MCF 10A (cell line): ENCODE measurements at regions of chr10 and their contacts with region 1.

Region 1: GRCh38 chr10:122307669-122308486 is 36.8 kb downstream of the BTBD16 start:
- DNase-seq: peak; percentile 98
- H3K4me3 Mint-ChIP-seq: peak overlapping the region; percentile 64
- H3K27ac Mint-ChIP-seq: peak overlapping the region; percentile 94
- H3K4me1 Mint-ChIP-seq: peaks cover 22% of the 10 kb centered on the region
- H3K27me3 Mint-ChIP-seq: no peaks in the 10 kb centered on the region
- CTCF ChIP-seq: no peak

Region 2: GRCh38 chr10:122323941-122324675 is 16.2 kb after region 1 on chr10:
- CTCF ChIA-PET with region 1: interaction called, 13 read pairs
- POLR2A ChIA-PET with region 1: interaction called, 73 read pairs
- intact Hi-C with region 1: no loop called
- DNase-seq: peak; percentile 91
- H3K4me3 Mint-ChIP-seq: no peak overlapping the region
- H3K27ac Mint-ChIP-seq: peak overlapping the region; percentile 90
- H3K4me1 Mint-ChIP-seq: peaks cover 14% of the 10 kb centered on the region
- H3K27me3 Mint-ChIP-seq: no peaks in the 10 kb centered on the region
- CTCF ChIP-seq: no peak